Activated naive CD4-positive, alpha-beta T cell treated with anti-CD3 and anti-CD28 coated beads for 36 hours (primary cell): ENCODE measurements at regions of chr6 and their contacts with region 1.

Region 1: DNA sequence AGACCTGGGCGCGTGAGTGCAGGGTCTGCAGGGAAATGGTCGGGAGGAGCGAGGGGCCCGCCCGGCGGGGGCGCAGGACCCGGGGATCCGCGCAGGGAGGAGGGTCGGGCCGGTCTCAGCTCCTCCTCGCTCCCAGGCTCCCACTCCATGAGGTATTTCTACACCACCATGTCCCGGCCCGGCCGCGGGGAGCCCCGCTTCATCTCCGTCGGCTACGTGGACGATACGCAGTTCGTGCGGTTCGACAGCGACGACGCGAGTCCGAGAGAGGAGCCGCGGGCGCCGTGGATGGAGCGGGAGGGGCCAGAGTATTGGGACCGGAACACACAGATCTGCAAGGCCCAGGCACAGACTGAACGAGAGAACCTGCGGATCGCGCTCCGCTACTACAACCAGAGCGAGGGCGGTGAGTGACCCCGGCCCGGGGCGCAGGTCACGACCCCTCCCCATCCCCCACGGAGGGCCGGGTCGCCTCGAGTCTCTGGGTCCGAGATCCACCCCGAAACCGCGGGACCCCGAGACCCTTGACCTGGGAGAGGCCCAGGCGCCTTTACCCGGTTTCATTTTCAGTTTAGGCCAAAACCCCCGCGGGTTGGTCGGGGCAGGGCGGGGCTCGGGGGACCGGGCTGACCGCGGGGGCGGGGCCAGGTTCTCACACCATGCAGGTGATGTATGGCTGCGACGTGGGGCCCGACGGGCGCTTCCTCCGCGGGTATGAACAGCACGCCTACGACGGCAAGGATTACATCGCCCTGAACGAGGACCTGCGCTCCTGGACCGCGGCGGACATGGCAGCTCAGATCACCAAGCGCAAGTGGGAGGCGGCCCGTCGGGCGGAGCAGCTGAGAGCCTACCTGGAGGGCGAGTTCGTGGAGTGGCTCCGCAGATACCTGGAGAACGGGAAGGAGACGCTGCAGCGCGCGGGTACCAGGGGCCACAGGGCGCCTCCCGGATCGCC is 54.2 kb upstream of the HLA-A start:
- DNase-seq: peak; percentile 87
- H3K4me3 Mint-ChIP-seq: peak overlapping the region; percentile 80
- H3K27ac Mint-ChIP-seq: peak overlapping the region; percentile 91
- H3K4me1 Mint-ChIP-seq: peaks cover 12% of the 10 kb centered on the region
- H3K27me3 Mint-ChIP-seq: no peaks in the 10 kb centered on the region

Region 2: GRCh38 chr6:29792123-29793035 is 95.7 kb before region 1 on chr6:
- CTCF ChIA-PET with region 1: no interaction called
- intact Hi-C with region 1: loop called (anchors 10 kb)
- DNase-seq: peak; percentile 82
- H3K4me3 Mint-ChIP-seq: peak overlapping the region; percentile 77
- H3K27ac Mint-ChIP-seq: no peak overlapping the region
- H3K4me1 Mint-ChIP-seq: peaks cover 12% of the 10 kb centered on the region
- H3K27me3 Mint-ChIP-seq: peaks cover 14% of the 10 kb centered on the region

Region 3: DNA sequence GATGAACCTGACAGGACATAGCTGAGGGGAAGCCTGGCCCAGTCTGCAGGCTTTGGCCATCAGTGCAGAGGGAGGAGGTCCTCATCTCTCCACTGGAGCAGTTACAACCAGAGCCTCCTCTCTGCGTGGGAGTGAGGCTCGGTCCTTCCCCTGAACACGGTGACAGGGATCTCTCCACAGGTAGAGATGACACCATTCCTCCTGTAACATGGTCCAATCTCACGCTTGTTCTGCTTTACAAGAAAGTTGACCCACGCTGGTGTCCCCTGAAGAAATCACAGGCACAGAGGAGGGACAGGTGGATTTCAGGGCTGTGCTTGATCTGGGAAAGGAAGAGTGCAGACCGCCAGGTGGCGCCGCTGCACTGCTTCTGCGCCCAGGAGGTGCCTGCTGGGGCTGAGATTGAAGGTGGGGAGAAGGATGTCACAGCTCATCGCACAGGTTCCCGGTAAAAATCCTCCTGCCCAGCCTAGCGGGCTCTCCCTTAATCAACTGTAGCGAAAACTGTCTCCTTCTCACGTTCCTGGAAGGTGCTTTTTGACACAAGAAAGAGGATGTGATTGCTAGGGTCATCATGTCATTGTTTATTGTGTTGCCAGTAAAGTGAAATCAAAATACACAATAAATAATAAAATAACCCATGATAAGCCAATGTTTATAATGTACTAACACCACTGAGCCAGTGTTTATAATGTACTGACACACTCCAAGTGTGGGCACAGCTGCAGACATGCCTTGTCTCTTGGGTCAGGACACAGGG is 40.0 kb before region 1 on chr6:
- CTCF ChIA-PET with region 1: no interaction called
- intact Hi-C with region 1: no loop called
- DNase-seq: peak; percentile 90
- H3K4me3 Mint-ChIP-seq: no peak overlapping the region
- H3K27ac Mint-ChIP-seq: no peak overlapping the region
- H3K4me1 Mint-ChIP-seq: peaks cover 25% of the 10 kb centered on the region
- H3K27me3 Mint-ChIP-seq: peaks cover 38% of the 10 kb centered on the region

Region 4: GRCh38 chr6:29926413-29927274 is 38.5 kb after region 1 on chr6:
- CTCF ChIA-PET with region 1: no interaction called
- intact Hi-C with region 1: loop called (anchors 5 kb)
- DNase-seq: peak; percentile 90
- H3K4me3 Mint-ChIP-seq: peak overlapping the region; percentile 96
- H3K27ac Mint-ChIP-seq: peak overlapping the region; percentile 94
- H3K4me1 Mint-ChIP-seq: peaks cover 31% of the 10 kb centered on the region
- H3K27me3 Mint-ChIP-seq: no peaks in the 10 kb centered on the region

Region 5: DNA sequence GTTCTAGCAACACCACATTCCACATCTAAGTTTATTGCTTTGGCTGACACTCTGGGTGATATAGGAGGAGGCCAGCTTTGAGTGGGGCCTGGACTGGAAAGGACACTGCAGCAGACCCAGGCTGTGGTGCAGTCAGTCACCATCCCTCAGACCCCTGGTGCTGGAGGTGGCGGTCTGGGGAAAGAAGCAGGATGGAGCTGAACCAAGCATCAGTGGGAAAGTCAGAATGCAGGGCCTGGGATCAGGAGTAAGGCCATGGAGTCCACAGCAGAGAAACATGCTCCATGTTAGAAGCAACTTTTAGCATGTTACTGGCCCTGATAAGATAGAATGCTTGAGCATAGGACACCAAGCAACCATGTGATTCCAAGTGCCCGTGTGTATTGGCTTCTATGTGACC is 60.2 kb after region 1 on chr6:
- CTCF ChIA-PET with region 1: no interaction called
- intact Hi-C with region 1: loop called (anchors 1 kb)
- DNase-seq: no peak
- H3K4me3 Mint-ChIP-seq: peak overlapping the region; percentile 11
- H3K27ac Mint-ChIP-seq: peak overlapping the region; percentile 54
- H3K4me1 Mint-ChIP-seq: peaks cover 36% of the 10 kb centered on the region
- H3K27me3 Mint-ChIP-seq: no peaks in the 10 kb centered on the region

Region 6: DNA sequence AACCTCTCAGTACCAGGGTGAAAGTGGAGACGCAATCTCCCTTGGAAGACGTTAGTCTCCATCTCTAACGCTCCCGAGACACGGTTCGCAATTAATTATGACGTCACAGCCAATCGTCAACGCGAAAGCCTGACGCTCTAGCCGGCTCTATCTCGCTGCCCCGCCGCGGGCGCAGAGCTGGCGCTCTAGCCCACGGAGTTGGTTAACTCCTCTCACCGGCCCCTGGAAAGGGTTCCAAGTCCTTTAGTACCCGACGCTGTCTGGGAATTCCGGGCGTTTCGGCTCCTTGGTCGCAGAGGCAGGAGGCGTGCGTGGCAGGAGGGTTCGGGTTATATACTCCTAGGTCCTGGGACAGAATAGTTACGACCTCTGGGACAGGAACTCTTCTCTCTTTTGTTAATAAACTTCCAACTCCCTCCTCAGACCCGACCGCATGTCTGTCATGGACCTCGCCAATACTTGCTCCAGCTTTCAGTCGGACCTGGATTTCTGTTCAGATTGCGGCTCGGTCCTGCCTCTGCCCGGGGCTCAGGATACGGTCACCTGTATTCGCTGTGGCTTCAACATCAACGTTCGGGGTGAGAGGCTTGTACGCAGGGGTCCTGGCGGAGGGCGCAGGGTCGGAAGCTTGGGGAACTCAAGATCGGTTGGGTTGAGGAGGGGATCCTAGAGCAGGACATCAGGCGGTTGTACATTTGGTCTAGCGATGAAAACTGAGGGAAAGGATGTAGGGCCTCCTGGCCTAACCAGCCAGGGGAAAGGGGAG is 173.2 kb after region 1 on chr6 and contains the start of gene POLR1H:
- CTCF ChIA-PET with region 1: no interaction called
- intact Hi-C with region 1: loop called (anchors 5 kb)
- DNase-seq: peak; percentile 94
- H3K4me3 Mint-ChIP-seq: peak within 1 kb of the TSS; percentile 98
- H3K27ac Mint-ChIP-seq: peak within 1 kb of the TSS; percentile 98
- H3K4me1 Mint-ChIP-seq: peaks cover 34% of the 10 kb centered on the region
- H3K27me3 Mint-ChIP-seq: no peaks in the 10 kb centered on the region
- total RNA-seq, gene POLR1H: 74.6 to 77.8 TPM